B cell (primary cell): ENCODE measurements at regions of chr5 and their contacts with region 1.

Region 1: GRCh38 chr5:179806250-179807222 is at the start of gene MGAT4B:
- DNase-seq: peak; percentile 83
- ATAC-seq: peak; percentile 80
- H3K4me3 ChIP-seq: peak within 1 kb of the TSS; percentile 7 to 72 (median 67)
- H3K4me3 Mint-ChIP-seq: peak within 1 kb of the TSS; percentile 71
- H3K27ac ChIP-seq: peak within 1 kb of the TSS; percentile 55 to 62
- H3K27ac Mint-ChIP-seq: peak within 1 kb of the TSS; percentile 73
- H3K4me1 ChIP-seq: peaks cover 28 to 36% of the 10 kb centered on the region in 2 donors
- H3K4me1 Mint-ChIP-seq: peaks cover 34% of the 10 kb centered on the region
- H3K27me3 ChIP-seq: no peaks in the 10 kb centered on the region
- H3K27me3 Mint-ChIP-seq: no peaks in the 10 kb centered on the region
- CTCF ChIP-seq: no peak
- total RNA-seq, gene MGAT4B: 139 and 165 TPM in 2 replicates

Region 2: DNA sequence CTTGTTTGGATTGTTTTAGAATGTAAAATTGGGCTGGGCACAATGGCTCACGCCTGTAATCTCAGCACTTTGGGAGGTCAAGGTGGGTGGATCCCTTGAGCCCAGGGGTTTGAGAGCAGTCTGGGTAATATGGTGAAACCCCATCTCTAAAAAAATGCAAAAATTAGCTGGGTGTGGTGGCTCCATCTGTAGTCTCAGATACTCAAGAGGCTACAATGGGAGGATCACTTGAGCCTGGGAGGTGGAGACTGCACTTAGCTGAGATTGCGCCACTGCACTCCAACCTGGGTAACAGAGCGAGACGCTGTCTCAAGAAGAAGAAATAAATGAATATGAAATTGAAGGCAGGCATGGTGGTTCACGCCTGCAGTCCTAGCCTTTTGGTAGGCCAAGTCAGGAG is 52.6 kb before region 1 on chr5:
- CTCF ChIA-PET with region 1: no interaction called
- POLR2A ChIA-PET with region 1: interaction called, 10 read pairs
- intact Hi-C with region 1: no loop called
- DNase-seq: no peak
- ATAC-seq: no peak
- H3K4me3 ChIP-seq: no peak overlapping the region
- H3K4me3 Mint-ChIP-seq: no peak overlapping the region
- H3K27ac ChIP-seq: no peak overlapping the region
- H3K27ac Mint-ChIP-seq: no peak overlapping the region
- H3K4me1 ChIP-seq: peaks cover 0 to 7% of the 10 kb centered on the region in 2 donors
- H3K4me1 Mint-ChIP-seq: peaks cover 32% of the 10 kb centered on the region
- H3K27me3 ChIP-seq: no peaks in the 10 kb centered on the region
- H3K27me3 Mint-ChIP-seq: no peaks in the 10 kb centered on the region
- CTCF ChIP-seq: no peak

Region 3: DNA sequence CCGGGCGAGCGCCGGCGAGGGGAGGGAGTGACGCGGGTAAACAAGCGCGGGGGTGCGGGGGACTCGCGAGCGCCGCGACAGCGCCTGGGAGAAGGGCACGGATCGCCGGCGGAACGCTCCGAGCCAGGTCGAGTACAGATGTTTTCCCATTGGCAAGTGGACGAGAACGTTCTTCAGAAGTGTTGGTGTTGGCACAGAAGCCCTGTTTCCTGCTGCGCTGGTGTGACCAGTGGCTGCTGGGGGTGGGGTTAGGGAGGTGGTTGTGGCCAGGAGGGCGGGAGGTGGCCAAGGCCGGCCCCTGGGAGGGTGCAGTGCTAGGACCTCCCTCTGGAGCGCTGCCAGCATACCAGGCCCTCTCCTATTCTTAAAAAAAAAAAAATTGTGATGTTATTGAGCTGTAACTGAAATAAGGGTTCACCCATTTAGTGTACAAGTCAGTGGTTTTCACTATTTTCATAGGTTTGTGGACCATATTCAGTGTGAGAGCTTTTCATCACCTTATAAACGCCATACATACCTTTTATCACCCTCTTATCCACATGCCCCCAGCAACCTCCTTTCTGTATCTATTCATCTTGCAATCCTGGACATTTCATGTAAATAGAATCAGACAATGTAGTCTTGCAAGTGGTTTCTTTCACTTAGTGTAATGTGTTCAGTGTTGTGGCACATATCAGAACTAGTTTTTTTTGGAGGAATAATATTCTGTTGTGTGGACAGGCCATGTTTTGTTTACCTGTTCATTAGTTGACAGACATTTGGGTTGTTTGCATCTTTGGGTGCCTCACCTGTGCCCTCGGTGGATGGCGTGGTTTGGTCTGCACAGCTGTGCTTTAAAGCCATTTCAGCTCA is 15.3 kb after region 1 on chr5:
- CTCF ChIA-PET with region 1: interaction called, 24 read pairs
- POLR2A ChIA-PET with region 1: interaction called, 44 read pairs
- intact Hi-C with region 1: loop called (anchors 1 kb)
- DNase-seq: peak; percentile 89
- ATAC-seq: peak; percentile 48
- H3K4me3 ChIP-seq: peak overlapping the region; percentile 22 to 94 (median 81)
- H3K4me3 Mint-ChIP-seq: peak overlapping the region; percentile 98
- H3K27ac ChIP-seq: peak overlapping the region; percentile 91 to 98
- H3K27ac Mint-ChIP-seq: peak overlapping the region; percentile 98
- H3K4me1 ChIP-seq: peaks cover 36 to 47% of the 10 kb centered on the region in 2 donors
- H3K4me1 Mint-ChIP-seq: peaks cover 55% of the 10 kb centered on the region
- H3K27me3 ChIP-seq: peaks cover 0 to 4% (median 0%) of the 10 kb centered on the region in 4 experiments
- H3K27me3 Mint-ChIP-seq: no peaks in the 10 kb centered on the region
- CTCF ChIP-seq: no peak

Region 4: GRCh38 chr5:179852993-179853547 is 46.5 kb after region 1 on chr5:
- CTCF ChIA-PET with region 1: interaction called, 21 read pairs
- POLR2A ChIA-PET with region 1: interaction called, 4 read pairs
- intact Hi-C with region 1: loop called (anchors 1 kb)
- DNase-seq: peak; percentile 77
- ATAC-seq: peak; percentile 85
- H3K4me3 ChIP-seq: no peak overlapping the region
- H3K4me3 Mint-ChIP-seq: peak overlapping the region; percentile 51
- H3K27ac ChIP-seq: peak overlapping the region; percentile 10 to 60
- H3K27ac Mint-ChIP-seq: peak overlapping the region; percentile 87
- H3K4me1 ChIP-seq: peaks cover 21 to 38% of the 10 kb centered on the region in 2 donors
- H3K4me1 Mint-ChIP-seq: peaks cover 35% of the 10 kb centered on the region
- H3K27me3 ChIP-seq: no peaks in the 10 kb centered on the region
- H3K27me3 Mint-ChIP-seq: no peaks in the 10 kb centered on the region
- CTCF ChIP-seq: no peak

Region 5: GRCh38 chr5:179907570-179908324 is 101.2 kb after region 1 on chr5 and contains the start of gene TBC1D9B:
- CTCF ChIA-PET with region 1: interaction called, 21 read pairs
- POLR2A ChIA-PET with region 1: interaction called, 3 read pairs
- intact Hi-C with region 1: loop called (anchors 2 kb)
- DNase-seq: peak; percentile 88
- ATAC-seq: peak; percentile 88
- H3K4me3 ChIP-seq: peak within 1 kb of the TSS; percentile 47 to 61 (median 59)
- H3K4me3 Mint-ChIP-seq: peak within 1 kb of the TSS; percentile 92
- H3K27ac ChIP-seq: peak within 1 kb of the TSS in 1 of 2 donors; percentile 16
- H3K27ac Mint-ChIP-seq: peak within 1 kb of the TSS; percentile 94
- H3K4me1 ChIP-seq: peaks cover 13 to 24% of the 10 kb centered on the region in 2 donors
- H3K4me1 Mint-ChIP-seq: peaks cover 19% of the 10 kb centered on the region
- H3K27me3 ChIP-seq: no peaks in the 10 kb centered on the region
- H3K27me3 Mint-ChIP-seq: no peaks in the 10 kb centered on the region
- CTCF ChIP-seq: no peak
- total RNA-seq, gene TBC1D9B: 144 and 149 TPM in 2 replicates

Region 6: DNA sequence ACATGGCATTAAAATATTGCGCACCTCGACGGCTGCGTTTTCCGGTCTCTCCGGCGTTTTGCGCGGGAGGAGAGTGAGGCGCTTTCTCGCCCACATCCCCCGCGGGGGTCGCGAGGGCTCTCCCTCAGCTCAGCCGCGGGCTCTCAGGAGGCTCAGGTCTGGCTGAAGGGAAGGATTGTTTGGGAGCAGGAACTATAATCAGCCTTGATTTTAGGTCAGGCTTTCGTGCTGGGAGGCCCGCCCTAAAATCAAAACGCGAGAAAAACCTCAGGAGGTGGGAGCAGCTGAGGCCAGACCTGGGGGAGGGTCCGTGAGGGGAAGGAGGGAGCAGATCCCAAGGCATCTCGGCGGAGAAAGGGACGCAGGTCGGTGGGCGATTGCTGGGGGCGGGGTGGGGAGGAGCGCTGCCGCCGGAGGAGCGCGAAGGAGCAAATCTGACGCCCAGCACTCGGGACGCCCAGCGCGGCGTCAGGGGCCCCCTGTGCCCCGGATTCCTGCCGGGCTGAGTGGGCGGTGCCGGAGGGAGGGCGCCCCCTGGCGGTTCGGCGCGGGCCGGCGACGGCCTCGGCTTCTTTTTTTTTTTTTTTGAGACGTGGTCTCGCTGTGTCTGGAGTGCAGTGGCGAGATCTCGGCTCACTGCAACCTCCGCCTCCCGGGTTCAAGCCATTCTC is 283.7 kb after region 1 on chr5:
- CTCF ChIA-PET with region 1: interaction called, 10 read pairs
- POLR2A ChIA-PET with region 1: interaction called, 4 read pairs
- intact Hi-C with region 1: no loop called
- DNase-seq: peak; percentile 87
- ATAC-seq: peak; percentile 95
- H3K4me3 ChIP-seq: peak overlapping the region; percentile 48 to 65 (median 58)
- H3K4me3 Mint-ChIP-seq: peak overlapping the region; percentile 90
- H3K27ac ChIP-seq: peak overlapping the region in 1 of 2 donors; percentile 56
- H3K27ac Mint-ChIP-seq: peak overlapping the region; percentile 82
- H3K4me1 ChIP-seq: peaks cover 3 to 11% of the 10 kb centered on the region in 2 donors
- H3K4me1 Mint-ChIP-seq: peaks cover 12% of the 10 kb centered on the region
- H3K27me3 ChIP-seq: peaks cover 0 to 9% (median 3%) of the 10 kb centered on the region in 4 experiments
- H3K27me3 Mint-ChIP-seq: peaks cover 10% of the 10 kb centered on the region
- CTCF ChIP-seq: peak; percentile 82